Gastrocnemius medialis (tissue), 4 donors: ENCODE measurements at regions of chr11 and their contacts with region 1.

Region 1: DNA sequence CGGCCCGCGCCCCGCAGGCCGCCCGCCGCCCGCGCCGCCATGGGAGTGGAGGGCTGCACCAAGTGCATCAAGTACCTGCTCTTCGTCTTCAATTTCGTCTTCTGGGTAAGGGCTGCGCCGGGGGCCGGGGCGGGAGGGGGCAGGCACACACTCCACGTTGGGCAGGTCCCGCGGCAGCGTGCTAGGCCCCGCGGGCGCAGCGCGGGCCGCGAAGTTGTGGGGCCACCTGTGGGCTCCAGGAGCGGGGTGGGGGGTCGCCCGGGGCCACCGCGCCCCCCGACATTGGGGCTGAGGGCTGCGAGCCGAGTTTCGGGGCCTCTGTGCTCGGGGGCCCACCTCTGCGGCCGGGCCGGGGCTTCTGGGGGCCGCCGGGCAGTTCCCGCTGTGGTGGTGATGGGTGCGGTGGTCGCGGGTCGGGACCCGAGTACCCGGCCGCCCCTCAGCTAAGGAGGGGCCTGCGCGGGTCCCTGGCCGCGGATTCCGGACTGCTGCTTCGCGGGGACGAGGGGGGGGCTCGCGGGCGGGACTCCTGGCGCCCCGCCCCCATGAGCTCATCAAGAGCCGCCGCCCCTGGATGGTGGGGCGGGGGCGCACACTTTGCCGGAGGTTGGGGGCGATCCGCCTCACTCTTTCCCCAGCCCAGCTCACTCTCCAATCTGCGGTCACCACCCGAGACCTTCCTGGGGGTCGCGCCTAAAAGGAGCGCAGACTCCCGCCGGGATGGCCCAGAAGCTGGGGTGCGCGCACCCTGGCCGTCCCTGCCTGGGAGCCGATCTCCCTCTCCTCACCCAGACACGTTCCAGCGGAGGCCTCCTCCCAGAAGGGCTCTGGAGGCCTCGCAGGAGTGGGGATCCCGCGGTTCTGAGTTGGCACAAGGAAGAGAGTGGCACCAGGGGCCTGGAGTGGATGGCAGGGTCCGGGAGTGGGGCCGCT is 667 bp downstream of the CD81 start:
- DNase-seq: no peak
- ATAC-seq: peak; percentile 49 to 73
- H3K4me3 ChIP-seq: peak overlapping the region; percentile 73 to 98 (median 92)
- H3K27ac ChIP-seq: peak overlapping the region; percentile 89 to 95 (median 91)
- H3K4me1 ChIP-seq: peaks cover 39 to 46% of the 10 kb centered on the region in 2 donors
- H3K27me3 ChIP-seq: no peaks in the 10 kb centered on the region
- CTCF ChIP-seq: no peak
- POLR2A ChIP-seq: peak in 1 of 2 donors; percentile 34

Region 2: GRCh38 chr11:2305140-2305840 is 72.5 kb before region 1 on chr11:
- in situ Hi-C with region 1: no loop called
- intact Hi-C with region 1: loop called (anchors 5 kb)
- DNase-seq: peak; percentile 59 to 64
- ATAC-seq: peak; percentile 68 to 86
- H3K4me3 ChIP-seq: no peak overlapping the region
- H3K27ac ChIP-seq: no peak overlapping the region
- H3K4me1 ChIP-seq: peaks cover 0 to 7% of the 10 kb centered on the region in 2 donors
- H3K27me3 ChIP-seq: no peaks in the 10 kb centered on the region
- CTCF ChIP-seq: peak; percentile 70 to 94 (median 93)
- POLR2A ChIP-seq: no peak

Region 3: DNA sequence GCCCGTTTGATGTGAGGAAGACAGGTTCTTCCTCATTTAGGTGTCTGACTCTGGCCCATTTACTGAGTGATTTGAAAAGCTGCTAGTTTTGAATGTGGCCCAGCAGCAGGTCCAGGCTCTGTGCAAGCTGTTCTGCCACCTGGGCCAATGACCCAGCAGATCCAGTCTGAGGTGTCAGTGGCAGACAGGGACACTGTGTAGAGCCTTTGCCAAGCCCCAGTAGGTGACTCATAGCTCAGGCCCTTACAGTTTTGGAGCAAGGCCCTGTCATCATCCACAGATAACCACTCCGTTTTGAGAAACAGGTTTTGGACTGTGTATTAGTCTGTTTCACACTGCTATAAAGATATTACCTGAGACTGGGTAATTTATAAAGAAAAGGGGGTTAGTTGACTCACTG is 52.1 kb before region 1 on chr11:
- in situ Hi-C with region 1: no loop called
- intact Hi-C with region 1: loop called (anchors 5 kb)
- DNase-seq: peak; percentile 81 to 87
- ATAC-seq: peak; percentile 100
- H3K4me3 ChIP-seq: no peak overlapping the region
- H3K27ac ChIP-seq: peak overlapping the region; percentile 61 to 78 (median 71)
- H3K4me1 ChIP-seq: peaks cover 4 to 5% of the 10 kb centered on the region in 2 donors
- H3K27me3 ChIP-seq: no peaks in the 10 kb centered on the region
- CTCF ChIP-seq: no peak
- POLR2A ChIP-seq: no peak

Region 4: GRCh38 chr11:2400069-2400760 is 22.4 kb after region 1 on chr11 and contains the start of gene TSSC4:
- in situ Hi-C with region 1: no loop called
- intact Hi-C with region 1: loop called (anchors 1 kb)
- DNase-seq: peak; percentile 100
- ATAC-seq: peak; percentile 96 to 97
- H3K4me3 ChIP-seq: peak within 1 kb of the TSS; percentile 84 to 100 (median 97)
- H3K27ac ChIP-seq: peak within 1 kb of the TSS; percentile 97 to 100 (median 98)
- H3K4me1 ChIP-seq: peaks cover 22 to 26% of the 10 kb centered on the region in 2 donors
- H3K27me3 ChIP-seq: no peaks in the 10 kb centered on the region
- CTCF ChIP-seq: peak; percentile 95 to 99 (median 98)
- POLR2A ChIP-seq: peak; percentile 91 to 97
- total RNA-seq, gene TSSC4: 53.4 to 92.5 (median 76.8) TPM